SK-N-SH (cell line): ENCODE measurements at regions of chr20 and their contacts with region 1.

Region 1: DNA sequence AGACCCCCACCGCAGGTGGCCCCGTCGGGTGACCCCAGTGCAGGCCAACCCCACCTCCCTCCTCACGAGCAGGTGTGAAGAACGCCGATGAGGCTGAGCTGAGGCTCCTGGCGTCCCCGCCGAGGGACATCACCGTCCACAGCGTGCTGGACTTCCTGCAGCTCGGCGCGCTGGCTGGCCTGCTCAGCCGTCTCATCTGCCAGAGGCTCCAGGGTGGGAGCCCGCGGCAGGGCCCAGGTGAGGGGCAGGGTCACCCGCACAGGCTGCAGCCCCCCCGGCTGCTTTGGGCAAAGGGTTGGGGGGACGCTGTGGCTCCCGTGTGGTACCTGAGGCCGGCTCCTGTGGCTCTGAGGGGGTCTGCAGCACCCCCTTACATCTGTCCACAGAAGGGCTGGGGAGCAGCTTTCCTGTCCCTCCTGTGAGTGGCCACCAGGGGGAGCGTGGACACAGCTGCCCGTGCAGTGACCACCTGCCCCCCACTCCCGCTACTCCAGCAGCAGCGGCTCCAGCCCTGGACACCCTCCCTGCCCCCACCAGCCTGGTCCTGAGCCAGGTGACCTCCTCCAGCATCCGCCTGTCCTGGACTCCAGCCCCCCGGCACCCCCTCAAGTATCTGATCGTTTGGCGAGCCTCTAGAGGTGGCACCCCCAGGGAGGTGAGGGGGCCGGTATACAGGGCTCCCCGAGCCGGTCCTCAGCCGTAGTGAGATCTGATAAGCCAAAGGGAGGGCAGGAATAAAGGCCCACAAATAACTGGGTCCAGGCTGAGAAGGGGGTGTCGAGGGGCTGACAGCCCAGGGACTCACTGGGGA is 16.5 kb downstream of the COL20A1 start:
- DNase-seq: peak; percentile 95
- H3K4me3 ChIP-seq: peak overlapping the region in 1 of 2 experiments; percentile 29; a peak in 1 of 4 replicates
- H3K27ac ChIP-seq: no peak overlapping the region
- H3K4me1 ChIP-seq: peaks cover 0 to 5% of the 10 kb centered on the region in 2 experiments; a peak in 1 of 4 replicates
- H3K27me3 ChIP-seq: no peaks in the 10 kb centered on the region
- CTCF ChIP-seq: peak; percentile 82
- EP300 ChIP-seq: no peak
- RAD21 ChIP-seq: peak; percentile 75

Region 2: GRCh38 chr20:63223221-63224207 is 86.0 kb before region 1 on chr20:
- CTCF ChIA-PET with region 1: interaction called, 36 read pairs
- POLR2A ChIA-PET with region 1: no interaction called
- DNase-seq: peak; percentile 76
- H3K4me3 ChIP-seq: no peak overlapping the region; a peak in 1 of 4 replicates
- H3K27ac ChIP-seq: no peak overlapping the region
- H3K4me1 ChIP-seq: peaks cover 0 to 17% of the 10 kb centered on the region in 2 experiments; a peak in 1 of 4 replicates
- H3K27me3 ChIP-seq: 0 out of 2 replicates have a peak, but pooled peaks cover 6% of the 10 kb centered on the region
- CTCF ChIP-seq: peak; percentile 81
- EP300 ChIP-seq: no peak
- RAD21 ChIP-seq: peak; percentile 70

Region 3: GRCh38 chr20:63290677-63291472 is 18.6 kb before region 1 on chr20:
- CTCF ChIA-PET with region 1: interaction called, 73 read pairs
- POLR2A ChIA-PET with region 1: no interaction called
- DNase-seq: peak; percentile 95
- H3K4me3 ChIP-seq: no peak overlapping the region
- H3K27ac ChIP-seq: no peak overlapping the region
- H3K4me1 ChIP-seq: no peaks in the 10 kb centered on the region; a peak in 1 of 4 replicates
- H3K27me3 ChIP-seq: peaks cover 6% of the 10 kb centered on the region; the same call in 1 of the 2 replicates
- CTCF ChIP-seq: peak; percentile 68
- EP300 ChIP-seq: no peak
- RAD21 ChIP-seq: peak; percentile 40

Region 4: GRCh38 chr20:63326897-63327745 is 17.7 kb after region 1 on chr20:
- CTCF ChIA-PET with region 1: interaction called, 43 read pairs
- POLR2A ChIA-PET with region 1: no interaction called
- DNase-seq: no peak
- H3K4me3 ChIP-seq: no peak overlapping the region
- H3K27ac ChIP-seq: no peak overlapping the region
- H3K4me1 ChIP-seq: peaks cover 0 to 3% of the 10 kb centered on the region in 2 experiments; a peak in 1 of 4 replicates
- H3K27me3 ChIP-seq: no peaks in the 10 kb centered on the region; the same call in 1 of the 2 replicates
- CTCF ChIP-seq: no peak
- EP300 ChIP-seq: no peak
- RAD21 ChIP-seq: no peak

Region 5: GRCh38 chr20:63344616-63345327 is 35.3 kb after region 1 on chr20:
- CTCF ChIA-PET with region 1: interaction called, 33 read pairs
- POLR2A ChIA-PET with region 1: no interaction called
- DNase-seq: peak; percentile 67
- H3K4me3 ChIP-seq: no peak overlapping the region
- H3K27ac ChIP-seq: no peak overlapping the region
- H3K4me1 ChIP-seq: peaks cover 0 to 14% of the 10 kb centered on the region in 2 experiments; a peak in 1 of 4 replicates
- H3K27me3 ChIP-seq: no peaks in the 10 kb centered on the region
- CTCF ChIP-seq: no peak
- EP300 ChIP-seq: no peak
- RAD21 ChIP-seq: no peak

Region 6: GRCh38 chr20:63366390-63367365 is 57.2 kb after region 1 on chr20:
- CTCF ChIA-PET with region 1: interaction called, 26 read pairs
- POLR2A ChIA-PET with region 1: interaction called, 3 read pairs
- DNase-seq: no peak
- H3K4me3 ChIP-seq: no peak overlapping the region
- H3K27ac ChIP-seq: no peak overlapping the region
- H3K4me1 ChIP-seq: peaks cover 0 to 4% of the 10 kb centered on the region in 2 experiments; a peak in 1 of 4 replicates
- H3K27me3 ChIP-seq: no peaks in the 10 kb centered on the region
- CTCF ChIP-seq: no peak
- EP300 ChIP-seq: no peak
- RAD21 ChIP-seq: no peak

Region 7: DNA sequence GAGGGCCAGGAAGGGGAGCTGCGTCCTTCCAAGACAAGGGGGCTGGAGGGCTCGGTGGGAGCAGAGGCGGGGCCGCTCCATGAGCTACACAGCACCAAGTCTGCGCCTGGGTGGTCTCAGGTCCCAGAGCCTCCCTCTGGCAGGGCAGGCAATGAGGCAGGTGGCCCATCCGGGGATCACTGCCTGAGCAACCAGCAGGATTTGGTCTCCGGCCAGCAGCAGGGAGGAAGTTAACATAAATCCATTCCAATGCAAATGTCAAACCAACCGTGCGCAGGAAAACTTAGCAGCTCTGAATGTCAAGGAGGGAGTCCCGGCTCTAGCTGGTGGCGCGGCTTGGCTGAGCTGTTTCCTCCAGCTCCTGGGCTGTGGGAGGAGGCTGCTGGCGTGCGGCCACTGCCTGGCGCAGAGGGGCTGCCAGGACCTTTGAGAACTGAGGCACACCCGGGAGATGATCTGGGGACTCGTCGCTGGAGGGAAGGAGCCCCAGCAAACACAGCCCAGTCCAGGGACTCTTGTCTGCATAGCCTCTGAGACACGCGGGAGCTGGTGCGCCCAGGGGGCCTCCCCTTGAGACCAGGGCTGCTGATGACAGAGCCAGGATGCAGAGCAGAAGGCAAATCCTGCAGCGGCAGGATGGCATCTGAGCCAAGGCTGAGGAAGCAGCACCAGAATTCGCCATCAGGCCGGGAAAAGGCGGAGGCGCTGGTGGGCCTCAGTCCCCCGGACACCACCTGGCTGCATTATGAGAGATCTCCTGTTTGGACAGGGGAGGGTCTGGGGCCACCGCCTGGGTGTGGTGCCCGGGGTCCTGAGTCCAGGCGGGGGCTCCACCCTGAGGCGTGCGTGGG is 84.8 kb after region 1 on chr20:
- CTCF ChIA-PET with region 1: interaction called, 27 read pairs
- POLR2A ChIA-PET with region 1: no interaction called
- DNase-seq: no peak
- H3K4me3 ChIP-seq: no peak overlapping the region
- H3K27ac ChIP-seq: no peak overlapping the region
- H3K4me1 ChIP-seq: no peaks in the 10 kb centered on the region; a peak in 1 of 4 replicates
- H3K27me3 ChIP-seq: peaks cover 36% of the 10 kb centered on the region
- CTCF ChIP-seq: no peak
- EP300 ChIP-seq: no peak
- RAD21 ChIP-seq: no peak